Heart left ventricle (tissue), 16 donors: ENCODE measurements at regions of chr15 and their contacts with region 1.

Region 1: DNA sequence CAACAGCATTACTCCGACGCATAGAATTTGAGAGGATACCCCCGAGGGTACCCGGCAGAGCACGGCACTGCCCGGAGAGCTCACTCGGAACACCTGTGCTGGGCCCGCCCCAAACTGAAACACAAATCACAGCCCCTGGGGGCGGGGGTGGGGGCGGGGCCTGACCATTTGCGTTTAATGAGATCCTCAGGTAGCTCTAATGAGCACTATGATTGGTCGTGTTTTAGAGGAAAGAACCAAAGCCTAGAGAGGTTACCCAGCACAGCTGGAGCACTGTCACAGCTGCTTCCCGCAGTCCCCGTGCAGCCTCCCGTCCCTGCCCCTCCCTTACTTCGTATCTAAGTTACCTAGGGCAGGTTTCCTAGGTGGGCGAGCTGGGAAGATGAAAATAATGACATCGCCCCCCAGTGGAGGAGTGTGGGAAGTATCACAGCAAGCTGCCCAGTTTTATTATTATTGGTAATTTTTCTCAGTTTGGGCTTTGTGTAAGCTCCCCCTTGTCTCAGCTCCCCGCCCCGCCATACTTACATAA is 187.1 kb downstream of the PDE8A start:
- DNase-seq: no peak
- ATAC-seq: peak in 3 of 4 donors; percentile 29 to 37 (median 29)
- H3K4me3 ChIP-seq: peak overlapping the region in 9 of 12 donors; percentile 9 to 40 (median 18)
- H3K27ac ChIP-seq: no peak overlapping the region
- H3K4me1 ChIP-seq: peaks cover 0 to 7% (median 6%) of the 10 kb centered on the region in 12 donors
- H3K27me3 ChIP-seq: peaks cover 0 to 21% (median 0%) of the 10 kb centered on the region in 9 donors
- CTCF ChIP-seq: peak; percentile 13 to 56 (median 34)
- POLR2A ChIP-seq: no peak

Region 2: GRCh38 chr15:84588053-84588874 is 580.4 kb before region 1 on chr15:
- intact Hi-C with region 1: loop called in 1 of 10 experiments (anchors 5 kb)
- DNase-seq: peak; percentile 84 to 92 (median 87)
- ATAC-seq: peak; percentile 98 to 99 (median 99)
- H3K4me3 ChIP-seq: peak overlapping the region in 10 of 12 donors; percentile 25 to 58 (median 44)
- H3K27ac ChIP-seq: no peak overlapping the region
- H3K4me1 ChIP-seq: peaks cover 0 to 10% (median 3%) of the 10 kb centered on the region in 12 donors
- H3K27me3 ChIP-seq: no peaks in the 10 kb centered on the region
- CTCF ChIP-seq: peak; percentile 82 to 98 (median 90)
- POLR2A ChIP-seq: no peak

Region 3: GRCh38 chr15:84949845-84950569 is 218.7 kb before region 1 on chr15:
- intact Hi-C with region 1: loop called in 2 of 10 experiments (anchors 5 to 10 kb)
- DNase-seq: no peak
- ATAC-seq: no peak
- H3K4me3 ChIP-seq: no peak overlapping the region
- H3K27ac ChIP-seq: no peak overlapping the region
- H3K4me1 ChIP-seq: peaks cover 0 to 25% (median 11%) of the 10 kb centered on the region in 12 donors
- H3K27me3 ChIP-seq: no peaks in the 10 kb centered on the region
- CTCF ChIP-seq: no peak
- POLR2A ChIP-seq: no peak

Region 4: DNA sequence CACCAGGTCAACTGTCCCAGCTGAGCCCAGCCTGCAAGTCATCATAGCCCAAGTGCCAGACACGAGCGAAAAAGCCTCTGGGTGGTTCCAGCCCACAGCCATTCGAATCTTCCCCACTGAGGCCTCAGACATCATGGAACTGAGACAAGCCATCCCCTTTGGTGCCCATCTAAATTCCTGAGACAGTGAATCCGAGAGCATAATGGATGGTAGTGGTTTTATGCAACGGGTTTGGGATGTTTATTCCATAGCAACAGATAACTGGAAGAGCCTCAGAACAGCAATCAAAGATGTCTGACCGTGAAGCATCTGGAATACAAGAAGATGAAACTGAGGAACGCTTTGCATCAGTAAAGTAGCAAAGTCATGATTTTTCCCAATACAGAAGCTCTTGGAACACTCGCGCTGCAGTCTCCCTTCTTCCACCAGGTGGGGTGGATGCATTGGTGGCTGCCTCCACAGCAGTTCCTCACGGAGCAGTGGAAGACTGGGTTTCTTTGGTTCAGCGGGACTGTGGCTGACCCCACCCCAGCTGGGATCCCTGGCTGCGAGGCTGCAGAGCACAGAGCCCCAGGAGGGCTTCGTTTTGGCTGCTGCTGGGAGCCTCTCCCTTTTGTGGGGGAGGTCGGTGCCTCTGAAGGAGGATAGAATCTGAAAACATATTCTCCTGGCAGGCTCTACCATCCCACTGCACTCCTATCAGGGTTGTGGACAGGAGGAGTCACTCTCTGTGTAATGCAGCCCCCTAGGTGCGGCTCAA is 213.4 kb before region 1 on chr15:
- intact Hi-C with region 1: loop called in 3 of 10 experiments (anchors 5 to 10 kb)
- DNase-seq: peak; percentile 72 to 79 (median 78)
- ATAC-seq: peak; percentile 87 to 97 (median 94)
- H3K4me3 ChIP-seq: peak overlapping the region in 10 of 12 donors; percentile 25 to 46 (median 32)
- H3K27ac ChIP-seq: peak overlapping the region in 1 of 12 donors; percentile 35
- H3K4me1 ChIP-seq: peaks cover 0 to 24% (median 10%) of the 10 kb centered on the region in 12 donors
- H3K27me3 ChIP-seq: no peaks in the 10 kb centered on the region
- CTCF ChIP-seq: peak; percentile 76 to 94 (median 88)
- POLR2A ChIP-seq: no peak

Region 5: DNA sequence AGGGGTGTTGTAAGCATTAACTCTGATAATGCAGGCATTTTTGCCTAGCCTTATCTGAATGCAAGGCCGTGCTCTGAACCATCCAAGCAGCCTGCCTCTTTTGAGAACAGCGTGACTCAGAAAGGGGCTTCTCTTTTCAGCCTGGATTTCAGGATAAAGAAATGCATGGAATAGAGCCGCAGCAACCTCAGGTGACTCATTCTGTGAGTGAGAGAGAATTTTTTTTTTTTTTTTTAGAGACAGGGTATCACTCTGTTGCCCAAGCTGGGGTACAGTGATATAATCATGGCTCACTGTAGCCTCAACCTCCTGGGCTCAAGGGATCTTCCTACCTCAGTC is 207.6 kb before region 1 on chr15:
- intact Hi-C with region 1: loop called in 2 of 10 experiments (anchors 10 kb)
- DNase-seq: no peak
- ATAC-seq: no peak
- H3K4me3 ChIP-seq: no peak overlapping the region
- H3K27ac ChIP-seq: no peak overlapping the region
- H3K4me1 ChIP-seq: peaks cover 0 to 15% (median 1%) of the 10 kb centered on the region in 12 donors
- H3K27me3 ChIP-seq: no peaks in the 10 kb centered on the region
- CTCF ChIP-seq: no peak
- POLR2A ChIP-seq: no peak

Region 6: GRCh38 chr15:85351960-85352359 is 183.3 kb after region 1 on chr15:
- intact Hi-C with region 1: no loop called
- DNase-seq: no peak
- ATAC-seq: no peak
- H3K4me3 ChIP-seq: peak overlapping the region in 7 of 12 donors; percentile 28 to 57 (median 35)
- H3K27ac ChIP-seq: peak overlapping the region in 9 of 12 donors; percentile 25 to 94 (median 82)
- H3K4me1 ChIP-seq: peaks cover 0 to 33% (median 16%) of the 10 kb centered on the region in 12 donors
- H3K27me3 ChIP-seq: no peaks in the 10 kb centered on the region
- CTCF ChIP-seq: no peak
- POLR2A ChIP-seq: no peak